Activated B cell treated with CpG ODN at 0.5 μM for 24 hours (primary cell): ENCODE measurements at regions of chr6 and their contacts with region 1.

Region 1: GRCh38 chr6:107704347-107705013 is 119.6 kb downstream of the SCML4 start:
- DNase-seq: no peak
- ATAC-seq: no peak
- H3K4me3 Mint-ChIP-seq: no peak overlapping the region
- H3K27ac Mint-ChIP-seq: no peak overlapping the region
- H3K4me1 Mint-ChIP-seq: peaks cover 2% of the 10 kb centered on the region
- H3K27me3 Mint-ChIP-seq: peaks cover 2% of the 10 kb centered on the region
- CTCF ChIP-seq: peak; percentile 88

Region 2: DNA sequence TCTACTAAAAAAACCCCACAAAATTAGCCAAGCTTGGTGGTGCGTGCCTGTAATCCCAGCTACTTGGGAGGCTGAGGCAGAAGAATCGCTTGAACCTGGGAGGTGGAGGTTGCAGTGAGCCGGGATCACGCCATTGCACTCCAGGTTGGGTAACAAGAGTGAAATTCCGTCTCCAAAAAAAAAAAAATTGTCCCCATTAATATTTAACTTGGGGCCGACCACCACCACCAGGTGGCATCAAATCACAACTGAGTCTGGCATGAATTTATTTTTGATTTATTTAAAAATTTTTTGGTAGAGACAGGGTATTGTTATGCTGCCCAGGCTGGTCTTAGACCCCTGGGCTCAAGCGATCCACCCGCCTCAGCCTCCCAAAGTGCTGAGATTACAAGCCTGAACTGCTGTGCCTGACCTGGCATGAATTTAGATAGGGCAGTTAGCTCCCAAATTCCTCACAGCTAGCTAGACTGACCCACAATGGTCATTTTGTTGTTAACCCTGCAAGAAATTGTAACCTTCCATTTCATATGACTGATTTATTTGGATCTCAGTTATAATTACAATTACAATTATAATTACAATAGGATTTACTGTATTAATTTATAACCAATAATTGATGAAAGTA is 572.0 kb before region 1 on chr6:
- CTCF ChIA-PET with region 1: interaction called, 7 read pairs
- POLR2A ChIA-PET with region 1: no interaction called
- intact Hi-C with region 1: loop called (anchors 5 kb)
- DNase-seq: no peak
- ATAC-seq: no peak
- H3K4me3 Mint-ChIP-seq: no peak overlapping the region
- H3K27ac Mint-ChIP-seq: no peak overlapping the region
- H3K4me1 Mint-ChIP-seq: peaks cover 3% of the 10 kb centered on the region
- H3K27me3 Mint-ChIP-seq: no peaks in the 10 kb centered on the region
- CTCF ChIP-seq: no peak

Region 3: DNA sequence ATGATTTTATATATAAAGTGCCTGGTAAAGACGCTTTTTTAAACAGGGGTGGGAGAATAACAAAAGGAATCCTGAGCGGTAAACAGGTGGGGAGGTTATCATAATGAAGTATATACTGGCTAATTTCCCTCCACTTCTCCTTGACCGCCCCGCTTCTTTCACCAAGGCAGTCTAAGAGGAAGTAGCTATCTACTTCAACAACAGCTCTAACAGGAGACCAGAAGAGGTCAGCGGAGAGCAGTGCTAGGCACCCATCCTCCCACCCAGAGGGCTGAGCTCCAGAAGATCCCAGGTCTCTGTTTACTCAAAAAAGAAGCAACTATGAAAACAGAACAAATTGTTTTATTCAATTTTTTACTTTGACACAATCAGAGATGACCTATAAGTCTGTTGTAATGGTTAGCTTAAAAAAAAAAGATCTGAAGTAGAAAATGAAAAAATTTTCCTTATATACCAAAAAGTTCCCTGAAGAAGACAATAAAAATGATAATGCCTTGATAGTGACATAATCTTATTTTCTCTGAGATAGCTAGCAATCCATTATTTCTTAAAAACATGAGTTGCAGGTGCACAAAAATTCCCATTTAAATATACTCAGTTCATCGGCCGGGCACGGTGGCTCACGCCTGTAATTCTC is 386.3 kb before region 1 on chr6:
- CTCF ChIA-PET with region 1: interaction called, 21 read pairs
- POLR2A ChIA-PET with region 1: no interaction called
- intact Hi-C with region 1: loop called (anchors 1 kb)
- DNase-seq: no peak
- ATAC-seq: peak; percentile 85
- H3K4me3 Mint-ChIP-seq: no peak overlapping the region
- H3K27ac Mint-ChIP-seq: no peak overlapping the region
- H3K4me1 Mint-ChIP-seq: peaks cover 15% of the 10 kb centered on the region
- H3K27me3 Mint-ChIP-seq: no peaks in the 10 kb centered on the region
- CTCF ChIP-seq: no peak

Region 4: GRCh38 chr6:107866606-107867301 is 162.3 kb after region 1 on chr6:
- CTCF ChIA-PET with region 1: no interaction called
- POLR2A ChIA-PET with region 1: no interaction called
- intact Hi-C with region 1: loop called (anchors 1 kb)
- DNase-seq: no peak
- ATAC-seq: peak; percentile 49
- H3K4me3 Mint-ChIP-seq: peak overlapping the region; percentile 66
- H3K27ac Mint-ChIP-seq: no peak overlapping the region
- H3K4me1 Mint-ChIP-seq: peaks cover 45% of the 10 kb centered on the region
- H3K27me3 Mint-ChIP-seq: peaks cover 3% of the 10 kb centered on the region
- CTCF ChIP-seq: no peak